CD8-positive, alpha-beta T cell (primary cell): ENCODE measurements at regions of chr10 and their contacts with region 1.

Region 1: GRCh38 chr10:81135851-81136250 is 598.1 kb downstream of the SH2D4B start:
- DNase-seq: no peak
- ATAC-seq: no peak
- H3K4me3 ChIP-seq: no peak overlapping the region
- H3K4me3 Mint-ChIP-seq: no peak overlapping the region
- H3K27ac ChIP-seq: no peak overlapping the region
- H3K27ac Mint-ChIP-seq: no peak overlapping the region
- H3K4me1 ChIP-seq: no peaks in the 10 kb centered on the region
- H3K4me1 Mint-ChIP-seq: no peaks in the 10 kb centered on the region
- H3K27me3 ChIP-seq: no peaks in the 10 kb centered on the region
- H3K27me3 Mint-ChIP-seq: no peaks in the 10 kb centered on the region
- CTCF ChIP-seq: no peak

Region 2: DNA sequence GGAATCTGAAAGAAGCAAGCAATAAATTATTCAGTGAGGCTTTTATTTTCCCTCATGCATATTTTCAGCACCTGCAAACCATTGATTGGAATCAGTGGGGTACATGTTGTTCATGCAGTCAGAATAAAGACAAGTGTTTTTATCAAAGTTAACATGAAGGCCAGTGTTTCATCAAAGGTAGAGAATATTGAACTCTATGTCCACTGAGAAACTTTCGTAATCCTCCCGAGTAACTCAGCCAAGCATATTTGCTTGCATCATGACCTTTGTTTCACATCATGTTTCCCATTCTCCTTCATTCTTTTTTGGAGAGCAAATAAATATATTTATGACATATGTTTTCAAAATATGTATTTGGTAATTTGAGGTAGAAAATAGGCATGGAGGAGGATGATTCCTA is 65.0 kb after region 1 on chr10:
- CTCF ChIA-PET with region 1: no interaction called
- POLR2A ChIA-PET with region 1: no interaction called
- intact Hi-C with region 1: no loop called
- DNase-seq: no peak
- ATAC-seq: no peak
- H3K4me3 ChIP-seq: no peak overlapping the region
- H3K4me3 Mint-ChIP-seq: no peak overlapping the region
- H3K27ac ChIP-seq: no peak overlapping the region
- H3K27ac Mint-ChIP-seq: no peak overlapping the region
- H3K4me1 ChIP-seq: no peaks in the 10 kb centered on the region
- H3K4me1 Mint-ChIP-seq: no peaks in the 10 kb centered on the region
- H3K27me3 ChIP-seq: no peaks in the 10 kb centered on the region
- H3K27me3 Mint-ChIP-seq: no peaks in the 10 kb centered on the region
- CTCF ChIP-seq: no peak

Region 3: DNA sequence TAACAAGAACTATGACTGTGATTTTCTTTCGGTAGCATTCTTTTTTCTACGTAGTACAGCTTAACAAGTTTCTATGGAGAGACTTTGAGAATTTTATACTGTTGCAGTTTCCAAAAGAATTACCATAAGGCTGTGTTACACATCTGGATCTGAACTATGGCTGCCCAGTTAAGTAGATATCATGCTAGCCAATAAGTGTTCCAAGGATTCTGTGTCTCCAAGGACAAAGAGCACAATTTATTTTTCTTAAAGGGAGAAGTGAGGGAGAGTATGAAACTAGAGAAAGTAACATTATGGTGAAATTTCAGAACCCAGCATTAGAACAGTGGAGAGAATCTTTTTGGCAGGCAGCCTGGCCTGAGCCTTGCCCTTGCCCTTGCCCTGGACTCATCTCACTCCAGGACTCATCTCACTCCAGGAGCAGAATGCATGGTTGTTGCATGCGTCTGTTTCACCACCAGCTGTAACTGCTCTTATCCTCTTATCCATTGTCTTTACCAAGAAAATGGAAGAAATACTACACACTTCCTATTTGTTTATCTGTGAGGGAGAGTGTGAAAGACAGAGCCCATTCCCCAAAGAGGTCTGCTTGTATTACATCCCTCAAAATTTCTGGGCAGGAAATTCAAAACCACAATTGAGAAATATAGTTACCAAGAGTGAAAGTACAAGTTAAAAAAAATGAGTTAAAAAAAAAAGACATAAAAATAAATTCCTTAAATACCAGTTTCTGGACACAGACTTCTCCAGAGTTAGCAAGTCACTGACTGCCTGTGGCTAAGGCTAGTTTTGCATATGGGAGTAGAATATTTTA is 1806.6 kb after region 1 on chr10:
- CTCF ChIA-PET with region 1: no interaction called
- POLR2A ChIA-PET with region 1: no interaction called
- intact Hi-C with region 1: loop called in 1 of 2 experiments (anchors 10 kb)
- DNase-seq: no peak
- ATAC-seq: no peak
- H3K4me3 ChIP-seq: no peak overlapping the region
- H3K4me3 Mint-ChIP-seq: no peak overlapping the region
- H3K27ac ChIP-seq: no peak overlapping the region
- H3K27ac Mint-ChIP-seq: no peak overlapping the region
- H3K4me1 ChIP-seq: no peaks in the 10 kb centered on the region
- H3K4me1 Mint-ChIP-seq: no peaks in the 10 kb centered on the region
- H3K27me3 ChIP-seq: no peaks in the 10 kb centered on the region
- H3K27me3 Mint-ChIP-seq: no peaks in the 10 kb centered on the region
- CTCF ChIP-seq: no peak